Posterior cingulate gyrus (tissue), 11 donors: ENCODE measurements at regions of chr12 and their contacts with region 1.

Region 1: DNA sequence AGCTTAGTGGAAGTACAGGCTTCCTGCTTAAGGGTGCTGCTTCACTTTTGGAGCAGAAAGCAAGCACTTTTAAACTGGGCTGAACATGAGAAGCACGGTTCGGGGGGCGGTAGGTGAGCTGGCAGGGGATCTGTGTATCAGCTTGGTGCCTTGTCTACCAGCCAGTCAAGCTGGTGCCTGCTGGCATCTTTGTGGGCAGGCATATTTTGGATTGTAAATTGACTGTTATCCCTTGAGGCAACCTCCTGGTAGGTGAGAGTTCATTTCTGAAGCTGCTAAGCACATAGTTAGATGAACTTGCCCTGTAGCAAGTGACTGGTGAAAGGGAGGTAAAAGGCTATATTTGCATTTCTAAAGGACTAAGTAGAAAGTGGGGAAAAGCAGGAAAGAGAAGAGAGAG is 121.1 kb upstream of the SYT10 start:
- DNase-seq: peak in 1 of 10 donors; percentile 59

Region 2: GRCh38 chr12:32477714-32478113 is 1083.0 kb before region 1 on chr12:
- intact Hi-C with region 1: no loop called
- DNase-seq: no peak

Region 3: DNA sequence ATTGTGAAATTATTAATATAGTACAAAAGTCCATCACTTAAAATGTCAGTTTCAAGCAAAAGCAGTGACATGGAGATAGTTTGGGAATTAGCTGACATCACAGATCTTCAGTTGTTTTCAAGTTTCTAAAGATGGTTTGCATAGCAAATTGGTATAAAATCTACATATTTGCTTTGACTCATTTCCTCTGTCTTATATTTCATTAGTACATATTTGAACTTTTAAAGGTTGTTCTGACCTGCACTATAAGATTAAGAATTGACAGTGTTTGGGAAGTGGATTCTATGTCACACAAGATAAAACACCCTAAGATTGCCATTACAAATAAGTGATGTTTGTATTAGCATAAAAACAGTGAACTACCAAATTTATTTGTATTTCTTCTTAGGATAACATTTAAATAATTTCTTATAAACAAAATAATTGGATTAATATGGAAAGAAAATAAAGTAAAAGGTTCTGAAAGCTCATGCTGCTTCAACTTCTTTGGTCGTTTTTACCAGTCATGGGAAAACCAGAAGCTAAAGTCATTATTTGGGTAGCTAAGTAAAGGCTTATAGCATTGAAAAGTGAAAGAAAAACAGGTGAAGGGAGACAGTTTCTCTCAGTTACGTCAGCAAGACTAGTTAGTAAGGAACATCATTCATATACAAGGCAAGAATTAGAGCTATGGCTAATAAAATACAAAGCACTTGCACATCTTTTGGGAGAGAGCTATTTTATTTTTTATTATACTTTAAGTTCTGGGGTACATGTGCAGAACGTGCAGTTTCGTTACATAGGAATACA is 49.0 kb after region 1 on chr12:
- intact Hi-C with region 1: loop called (anchors 5 kb)
- DNase-seq: no peak